Motor neuron (in vitro differentiated cells): ENCODE measurements at regions of chr11 and their contacts with region 1.

Region 1: GRCh38 chr11:67391304-67392132 is at the start of gene RAD9A:
- ATAC-seq: peak; percentile 69 to 83 (median 76)
- H3K4me3 ChIP-seq: peak within 1 kb of the TSS; percentile 57 to 79 (median 59)
- H3K27ac ChIP-seq: peak within 1 kb of the TSS; percentile 77 to 90
- H3K4me1 ChIP-seq: peaks cover 6 to 10% of the 10 kb centered on the region in 2 donors
- total RNA-seq, gene RAD9A: 4.0 to 25.5 (median 16.2) TPM

Region 2: DNA sequence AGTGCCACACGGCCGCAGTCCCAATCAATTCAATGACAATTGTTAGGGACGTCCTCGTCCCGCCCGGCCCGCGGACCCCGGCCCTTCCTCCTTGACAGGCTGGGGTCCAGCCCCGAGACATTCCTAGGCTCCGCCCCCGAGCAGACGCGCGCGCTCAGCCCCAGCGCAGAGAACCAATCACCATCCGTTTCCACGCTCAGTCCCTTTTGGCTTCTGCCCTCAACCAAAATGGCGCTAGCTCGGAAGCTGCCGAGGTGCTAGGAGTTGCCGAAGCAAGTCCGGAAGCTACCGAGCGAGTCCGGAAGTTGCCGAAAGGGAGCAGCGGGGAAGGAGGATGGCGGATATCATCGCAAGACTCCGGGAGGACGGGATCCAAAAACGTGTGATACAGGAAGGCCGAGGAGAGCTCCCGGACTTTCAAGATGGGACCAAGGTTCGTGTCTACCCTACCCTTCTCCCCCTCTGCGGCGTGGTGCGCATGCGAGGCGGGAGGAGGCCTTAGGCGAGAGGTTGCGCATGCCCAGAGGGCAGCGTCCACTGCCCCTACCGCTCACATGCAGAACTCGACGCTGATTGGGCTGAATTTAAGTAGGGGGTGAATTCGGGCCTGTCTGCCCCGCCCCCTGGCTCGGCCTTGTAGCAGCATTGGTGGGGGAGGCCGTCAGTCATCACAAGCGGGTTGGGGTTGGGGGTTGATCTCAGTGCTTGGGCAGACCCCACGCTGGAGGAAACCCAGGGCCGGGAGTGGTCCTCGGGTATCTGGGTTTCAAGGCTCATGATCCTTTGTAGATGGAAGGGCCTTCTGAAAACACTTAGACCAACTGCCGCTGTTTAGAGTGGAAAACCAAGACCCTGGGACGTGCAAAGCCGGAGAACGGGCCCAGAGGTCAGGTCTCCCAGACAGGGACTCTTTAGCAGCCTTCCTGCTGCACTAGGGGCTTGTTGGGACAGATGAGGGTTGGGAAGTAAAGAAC is 91.6 kb after region 1 on chr11 and contains the start of gene AIP:
- in situ Hi-C with region 1: loop called in 1 of 9 experiments (anchors 25 kb)
- ATAC-seq: peak; percentile 90 to 98 (median 92)
- H3K4me3 ChIP-seq: peak within 1 kb of the TSS; percentile 44 to 65 (median 54)
- H3K27ac ChIP-seq: peak within 1 kb of the TSS; percentile 94
- H3K4me1 ChIP-seq: peaks cover 6 to 12% of the 10 kb centered on the region in 2 donors
- total RNA-seq, gene AIP: 48.1 to 72.2 (median 59.5) TPM